HepG2 (cell line): ENCODE measurements at regions of chr12 and their contacts with region 1.

Region 1: DNA sequence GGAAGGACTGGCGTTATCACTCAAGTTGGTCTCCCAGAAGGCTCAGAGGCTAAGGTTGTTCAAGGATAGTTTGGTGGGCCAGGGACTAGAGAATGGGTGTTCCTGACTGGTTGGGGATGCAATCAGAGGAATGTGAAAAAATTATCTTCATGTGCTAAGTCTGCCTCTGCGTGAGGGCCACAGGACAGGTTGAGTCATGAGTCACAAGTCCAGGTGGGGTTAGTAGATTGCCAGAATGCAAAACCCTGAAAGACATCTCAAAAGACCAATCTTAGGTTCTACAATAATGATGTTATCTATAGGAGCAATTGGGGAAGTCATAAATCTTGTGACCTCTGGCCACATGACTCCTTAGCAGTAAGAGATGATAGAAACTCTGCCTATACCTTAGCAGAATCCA is 220.1 kb upstream of the EEA1 start:
- DNase-seq: no peak
- ATAC-seq: no peak
- H3K4me3 ChIP-seq: no peak overlapping the region
- H3K27ac ChIP-seq: no peak overlapping the region
- H3K4me1 ChIP-seq: peaks cover 22% of the 10 kb centered on the region
- H3K27me3 ChIP-seq: peaks cover 0 to 2% of the 10 kb centered on the region in 2 experiments; a peak in 1 of 5 replicates
- CTCF ChIP-seq: no peak
- EP300 ChIP-seq: no peak
- POLR2A ChIP-seq: no peak
- RAD21 ChIP-seq: no peak

Region 2: DNA sequence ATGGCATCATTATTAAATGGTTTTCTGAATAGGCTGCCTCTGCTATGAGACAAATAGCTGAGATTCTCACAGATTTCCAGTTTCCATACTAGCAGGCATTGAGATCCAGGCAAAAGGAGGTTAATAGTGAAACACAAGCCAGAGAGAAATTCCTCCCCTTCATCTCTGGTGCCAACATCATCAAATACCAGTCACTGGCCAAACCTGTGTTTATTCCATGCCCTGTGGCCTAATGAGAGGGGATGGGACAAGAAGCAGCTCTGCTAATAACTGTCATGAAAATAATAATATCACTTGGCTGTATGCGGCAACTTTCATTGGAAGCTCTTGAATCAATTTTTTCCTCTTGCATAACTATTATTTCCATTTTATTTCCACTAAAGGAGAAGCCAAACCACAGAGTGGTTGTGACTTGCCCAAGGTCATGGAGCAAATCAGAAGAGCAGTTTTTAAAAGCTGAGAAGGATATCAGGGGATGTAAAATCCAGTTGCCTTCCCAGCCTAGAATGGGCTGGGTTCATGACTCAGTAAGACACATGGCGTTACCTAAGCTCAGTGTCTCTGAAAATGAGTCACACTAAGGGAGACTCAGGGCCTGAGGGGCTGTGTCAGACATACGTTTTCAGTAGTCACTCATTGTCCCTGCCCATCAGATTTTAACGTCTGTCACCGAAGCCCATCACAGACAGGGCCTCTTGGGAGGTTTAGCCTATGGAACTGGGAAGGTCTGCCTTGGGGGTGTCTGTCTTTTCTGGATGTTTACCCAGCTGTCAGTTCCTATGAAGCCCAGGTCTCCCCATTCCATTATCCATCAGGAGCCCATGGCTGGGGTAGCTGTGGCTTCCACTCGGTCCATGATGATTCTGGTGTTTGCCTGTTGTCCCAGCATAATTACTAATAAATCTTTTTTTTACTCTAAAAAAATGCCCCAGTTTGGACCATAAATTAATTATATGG is 11.3 kb before region 1 on chr12:
- CTCF ChIA-PET with region 1: no interaction called
- POLR2A ChIA-PET with region 1: interaction called, 5 read pairs
- in situ Hi-C with region 1: no loop called
- intact Hi-C with region 1: loop called (anchors 2 kb)
- DNase-seq: no peak
- ATAC-seq: no peak
- H3K4me3 ChIP-seq: no peak overlapping the region
- H3K27ac ChIP-seq: no peak overlapping the region
- H3K4me1 ChIP-seq: peaks cover 90% of the 10 kb centered on the region
- H3K27me3 ChIP-seq: no peaks in the 10 kb centered on the region
- CTCF ChIP-seq: no peak
- EP300 ChIP-seq: no peak
- POLR2A ChIP-seq: no peak
- RAD21 ChIP-seq: no peak

Region 3: DNA sequence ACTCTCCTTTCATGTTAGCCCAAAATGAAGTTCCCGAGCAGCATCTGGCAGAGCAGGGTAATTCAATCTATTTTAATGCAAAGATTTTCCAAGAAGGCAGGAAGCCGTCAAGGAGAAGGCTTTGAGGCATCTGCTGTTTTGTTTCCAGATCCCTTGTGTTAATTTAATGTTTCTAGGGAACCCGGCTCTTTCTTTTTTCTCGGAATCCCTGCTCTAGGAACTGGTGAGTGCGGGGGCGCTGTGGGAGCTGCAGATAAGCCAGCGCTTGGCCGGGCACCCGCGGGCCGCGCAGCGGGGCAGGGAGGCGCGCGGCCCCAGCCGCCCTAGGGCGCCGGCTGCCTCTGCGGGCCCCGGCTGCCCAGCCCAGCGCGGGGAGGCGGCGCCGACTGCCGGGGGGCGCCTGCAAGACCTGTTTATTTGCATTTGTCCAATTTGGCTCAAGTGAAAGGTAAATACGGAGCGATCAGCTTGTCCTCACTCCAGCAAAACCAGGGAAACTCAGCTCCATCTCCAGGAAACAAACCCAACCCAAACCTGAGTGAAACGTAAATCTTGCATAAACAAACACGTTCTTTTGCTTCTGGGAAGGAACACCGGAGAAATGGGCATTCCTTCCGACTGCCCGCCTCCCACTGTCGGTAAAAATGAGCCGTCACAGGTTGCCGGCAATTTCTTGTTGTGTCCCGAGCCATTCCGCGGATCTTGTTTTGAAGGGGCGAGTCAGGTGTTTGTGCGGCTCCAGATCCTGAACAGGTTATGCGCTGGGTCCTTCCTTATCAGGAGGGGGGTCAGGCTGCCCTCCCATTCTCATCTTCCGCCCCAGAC is 593.1 kb after region 1 on chr12:
- CTCF ChIA-PET with region 1: no interaction called
- POLR2A ChIA-PET with region 1: no interaction called
- in situ Hi-C with region 1: no loop called
- intact Hi-C with region 1: no loop called
- DNase-seq: peak; percentile 55
- ATAC-seq: peak; percentile 100
- H3K4me3 ChIP-seq: peak overlapping the region; percentile 59 to 84 (median 77)
- H3K27ac ChIP-seq: peak overlapping the region; percentile 63
- H3K4me1 ChIP-seq: peaks cover 30% of the 10 kb centered on the region
- H3K27me3 ChIP-seq: no peaks in the 10 kb centered on the region
- CTCF ChIP-seq: peak; percentile 60
- EP300 ChIP-seq: peak; percentile 28 to 29; a peak in 1 of 4 replicates
- POLR2A ChIP-seq: no peak
- RAD21 ChIP-seq: peak; percentile 91